Left ventricle myocardium superior (tissue), 1 donor: ENCODE measurements at regions of chr10 and their contacts with region 1.

Region 1: GRCh38 chr10:62826273-62826672 is 10.1 kb upstream of the EGR2 start:
- DNase-seq: no peak
- ATAC-seq: no peak

Region 2: DNA sequence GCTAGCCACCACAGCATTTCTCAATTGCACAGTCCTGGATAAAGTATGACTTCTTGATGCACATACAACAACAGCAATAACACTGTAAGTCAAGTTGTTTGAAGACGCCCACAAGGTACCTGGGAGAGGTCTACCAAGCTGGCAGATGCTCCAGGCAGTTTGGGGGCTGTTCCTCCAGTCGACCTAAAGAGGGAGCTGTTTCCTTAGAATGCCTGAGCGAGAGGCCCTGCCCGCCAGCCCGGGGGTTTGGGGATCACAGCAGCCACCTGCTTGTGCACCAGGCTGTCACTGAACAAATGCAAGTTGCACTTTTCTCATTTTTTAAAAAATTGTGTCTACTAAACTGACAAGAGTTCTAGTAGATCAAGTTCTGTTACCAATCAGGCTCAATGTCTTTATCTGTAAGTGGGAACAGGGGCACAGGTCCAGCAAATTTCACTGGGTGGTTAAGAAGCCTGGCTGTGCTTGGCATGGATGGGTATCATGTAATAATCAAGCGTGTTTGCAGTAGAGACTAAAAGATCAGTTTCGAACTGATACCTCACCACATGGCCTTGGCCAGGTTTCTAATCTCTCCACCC is 215.5 kb before region 1 on chr10:
- intact Hi-C with region 1: loop called (anchors 10 kb)
- DNase-seq: peak; percentile 55
- ATAC-seq: peak; percentile 75